ENCODE measurements at regions of chr16 and their contacts with region 1.

Region 1: DNA sequence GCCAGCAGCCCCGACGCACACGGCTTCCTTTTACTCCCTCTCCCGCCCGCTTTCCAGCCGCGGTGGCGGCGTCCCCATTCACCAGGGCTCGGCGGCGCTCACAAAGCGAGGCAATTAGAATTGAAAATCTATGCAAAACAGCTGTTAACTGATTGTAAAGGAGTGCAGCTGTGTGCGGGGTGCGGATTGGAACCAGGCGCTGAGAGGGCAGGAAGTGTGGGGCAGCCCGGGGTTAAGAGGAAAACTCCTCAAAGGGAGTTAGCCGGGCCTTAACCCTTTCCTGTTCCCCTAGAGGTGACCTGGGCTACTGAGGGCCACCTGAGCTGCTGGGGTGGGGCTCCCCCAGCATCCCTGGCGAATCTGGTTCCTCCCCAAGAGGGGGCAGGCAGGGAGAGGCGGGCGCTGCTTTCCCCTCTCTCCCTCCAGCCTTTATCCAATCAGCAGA is 5.8 kb upstream of the GSE1 start:
- DNase-seq: no peak
- ATAC-seq: no peak

Region 2: GRCh38 chr16:85420501-85421337 is 186.6 kb before region 1 on chr16:
- intact Hi-C with region 1: loop called (anchors 10 kb)
- DNase-seq: peak; percentile 79
- ATAC-seq: peak; percentile 69

Region 3: GRCh38 chr16:85554112-85554813 is 53.1 kb before region 1 on chr16:
- intact Hi-C with region 1: loop called (anchors 10 kb)
- DNase-seq: peak; percentile 57
- ATAC-seq: peak; percentile 62

Region 4: DNA sequence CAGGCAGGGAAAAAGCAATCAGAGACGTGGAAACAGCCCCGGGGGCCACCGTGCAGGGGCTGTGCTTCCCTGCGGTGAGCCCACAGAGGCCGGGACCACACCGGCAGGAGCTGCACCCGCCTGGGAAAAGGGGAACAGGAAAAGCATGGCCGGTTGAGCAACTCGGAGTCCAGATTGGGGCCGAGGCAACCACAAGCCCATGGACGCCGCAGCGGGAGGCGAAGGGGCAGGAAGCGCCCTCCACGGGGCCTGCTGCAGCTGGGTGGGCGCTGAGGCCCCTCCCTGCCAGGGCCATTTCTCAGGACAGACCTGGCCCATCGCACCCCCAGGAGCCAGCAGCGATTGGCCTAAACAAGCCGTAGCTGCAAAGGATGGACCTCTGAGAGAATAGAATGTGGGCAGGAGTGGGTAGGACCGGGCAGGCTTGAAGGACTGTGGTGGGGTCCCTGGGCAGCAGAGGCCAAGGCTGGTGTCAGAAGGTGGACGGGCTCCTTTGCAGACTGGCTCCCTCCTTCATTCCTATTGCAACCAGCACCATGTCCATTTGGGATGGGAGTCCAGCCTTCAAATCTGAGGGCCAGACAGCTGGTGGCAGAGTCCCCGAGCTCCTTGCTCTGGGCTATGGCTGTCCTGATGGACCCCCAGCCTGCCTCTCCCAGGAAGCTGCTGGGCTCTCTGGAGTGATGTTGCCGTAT is 222.6 kb after region 1 on chr16:
- intact Hi-C with region 1: no loop called
- DNase-seq: peak; percentile 59
- ATAC-seq: peak; percentile 66